GM18951 (cell line): ENCODE measurements at regions of chr5 and their contacts with region 1.

Region 1: GRCh38 chr5:93582677-93583438 is at the start of gene NR2F1:
- POLR2A ChIP-seq: no peak

Region 2: DNA sequence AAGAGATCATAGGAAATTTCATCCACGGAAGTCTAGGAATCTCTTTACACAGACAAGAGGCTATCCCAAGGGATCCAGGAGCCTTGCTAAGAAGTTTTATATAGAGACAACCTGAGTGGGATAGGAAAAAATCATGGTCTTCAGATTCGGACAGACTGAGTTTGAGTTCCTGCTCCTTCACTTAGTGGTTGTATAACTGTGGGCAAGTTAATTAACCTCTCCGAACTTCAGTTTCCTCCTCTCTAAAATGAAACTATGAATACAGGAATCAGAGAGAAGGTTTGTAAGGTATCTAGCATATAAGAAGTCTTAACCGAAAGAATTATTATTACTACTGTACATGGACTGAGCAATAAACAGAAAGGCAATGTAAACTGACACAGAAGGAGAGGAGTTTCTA is 37.0 kb before region 1 on chr5:
- in situ Hi-C with region 1: no loop called
- POLR2A ChIP-seq: no peak

Region 3: GRCh38 chr5:93789173-93790070 is 206.6 kb after region 1 on chr5:
- in situ Hi-C with region 1: loop called (anchors 10 kb)
- POLR2A ChIP-seq: no peak

Region 4: GRCh38 chr5:93915142-93915553 is 332.3 kb after region 1 on chr5:
- in situ Hi-C with region 1: loop called (anchors 10 kb)
- POLR2A ChIP-seq: no peak